Breast epithelium (tissue), 4 donors: ENCODE measurements at regions of chr1 and their contacts with region 1.

Region 1: GRCh38 chr1:67749844-67750689 is 65.1 kb downstream of the GADD45A start:
- DNase-seq: peak in 1 of 2 donors; percentile 88
- H3K4me3 ChIP-seq: peak overlapping the region in 1 of 3 donors; percentile 45
- H3K27ac ChIP-seq: peak overlapping the region; percentile 88 to 93
- H3K4me1 ChIP-seq: peaks cover 15 to 43% of the 10 kb centered on the region in 2 donors
- H3K27me3 ChIP-seq: no peaks in the 10 kb centered on the region
- CTCF ChIP-seq: no peak
- POLR2A ChIP-seq: no peak

Region 2: GRCh38 chr1:67535474-67535873 is 214.6 kb before region 1 on chr1:
- intact Hi-C with region 1: loop called (anchors 10 kb)
- DNase-seq: peak; percentile 79 to 81
- H3K4me3 ChIP-seq: no peak overlapping the region
- H3K27ac ChIP-seq: no peak overlapping the region
- H3K4me1 ChIP-seq: no peaks in the 10 kb centered on the region
- H3K27me3 ChIP-seq: no peaks in the 10 kb centered on the region
- CTCF ChIP-seq: peak; percentile 95 to 98 (median 96)
- POLR2A ChIP-seq: no peak

Region 3: DNA sequence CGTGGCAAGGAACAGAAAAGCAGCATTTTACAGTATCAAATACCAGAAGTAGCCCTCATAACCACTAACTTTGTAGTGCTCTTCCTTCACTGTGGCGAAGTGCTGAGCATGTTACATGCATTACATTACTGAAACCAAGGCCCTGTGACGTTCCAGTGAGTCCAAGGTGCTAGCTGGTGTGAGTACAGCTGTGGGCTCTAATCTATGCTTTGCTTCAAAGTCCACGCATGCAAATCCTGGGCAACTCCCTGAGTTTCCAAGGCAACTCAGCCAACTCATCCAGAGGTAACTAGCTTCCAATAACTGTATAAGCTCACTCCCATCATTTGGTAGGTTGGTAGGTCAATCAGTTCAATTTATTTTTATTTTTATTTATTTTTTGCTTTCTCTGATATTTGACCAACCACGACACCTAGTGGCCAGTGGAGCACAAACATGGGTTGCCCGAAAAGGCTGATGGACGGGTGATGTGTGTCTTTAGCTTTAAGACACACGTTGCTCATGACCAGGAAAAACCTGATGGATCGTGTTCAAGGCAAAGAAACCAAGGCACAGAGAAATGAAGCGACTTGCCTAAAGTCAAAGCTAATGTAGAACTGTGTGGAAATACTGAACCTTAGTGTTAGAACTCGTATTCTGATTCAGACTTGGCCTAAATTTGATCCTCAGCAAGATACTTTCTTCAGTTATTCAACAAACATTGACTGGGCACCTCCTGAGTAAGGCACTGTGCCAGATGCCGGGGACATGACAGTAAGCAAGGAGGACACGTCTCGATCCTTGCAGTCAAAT is 10.2 kb after region 1 on chr1:
- intact Hi-C with region 1: loop called (anchors 1 kb)
- DNase-seq: peak; percentile 50 to 73
- H3K4me3 ChIP-seq: no peak overlapping the region
- H3K27ac ChIP-seq: peak overlapping the region; percentile 14 to 65
- H3K4me1 ChIP-seq: no peaks in the 10 kb centered on the region
- H3K27me3 ChIP-seq: no peaks in the 10 kb centered on the region
- CTCF ChIP-seq: peak; percentile 88 to 91 (median 89)
- POLR2A ChIP-seq: no peak